ENCODE measurements at regions of chr5 and their contacts with region 1.

Region 1: DNA sequence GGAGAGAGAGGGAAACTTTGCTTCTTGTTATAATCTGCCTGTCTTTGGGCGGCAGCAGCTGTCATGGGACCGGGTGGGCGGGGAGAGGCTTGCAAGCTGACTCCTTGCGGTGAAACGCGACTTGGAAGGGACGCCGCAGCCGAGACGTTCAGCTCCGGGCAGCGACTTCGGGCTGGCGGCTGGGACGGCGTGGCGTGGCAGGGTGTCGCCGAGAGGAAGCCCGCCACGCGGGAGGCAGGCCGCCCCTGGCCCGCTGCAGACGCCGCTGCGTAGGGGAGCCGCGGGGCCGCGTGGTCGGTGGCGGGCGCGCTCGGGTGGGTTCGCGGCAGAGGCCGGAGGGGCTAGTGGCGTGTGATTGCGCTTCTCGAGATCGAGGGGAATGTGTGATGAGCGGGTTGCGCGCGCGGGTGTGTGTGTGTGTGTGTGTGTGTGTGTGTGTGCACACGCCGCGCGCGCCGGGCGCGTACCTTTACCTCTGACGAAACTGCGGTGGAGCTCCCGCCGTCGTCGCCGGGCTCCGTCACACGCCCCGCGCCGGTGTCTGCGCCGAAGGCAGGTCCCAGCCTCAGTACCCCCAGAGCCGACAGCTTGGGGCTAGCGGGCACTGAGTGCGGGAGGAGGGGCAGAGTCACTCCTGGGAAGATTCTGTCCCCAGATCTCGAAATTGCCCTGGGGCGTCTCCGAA is 1.7 kb downstream of the PPARGC1B start:
- DNase-seq: peak; percentile 96
- ATAC-seq: peak; percentile 64 to 68
- H3K4me3 ChIP-seq: peak overlapping the region; percentile 86 to 98 (median 94)
- H3K27ac ChIP-seq: peak overlapping the region; percentile 98 to 99 (median 99)
- H3K4me1 ChIP-seq: peaks cover 18 to 30% of the 10 kb centered on the region in 2 donors
- H3K27me3 ChIP-seq: no peaks in the 10 kb centered on the region
- CTCF ChIP-seq: peak in 1 of 5 experiments; percentile 14
- POLR2A ChIP-seq: peak; percentile 82 to 89

Region 2: GRCh38 chr5:149108651-149109280 is 623.0 kb before region 1 on chr5:
- in situ Hi-C with region 1: no loop called
- intact Hi-C with region 1: no loop called
- DNase-seq: no peak
- ATAC-seq: no peak
- H3K4me3 ChIP-seq: no peak overlapping the region
- H3K27ac ChIP-seq: no peak overlapping the region
- H3K4me1 ChIP-seq: no peaks in the 10 kb centered on the region
- H3K27me3 ChIP-seq: no peaks in the 10 kb centered on the region
- CTCF ChIP-seq: no peak
- POLR2A ChIP-seq: no peak

Region 3: GRCh38 chr5:149667084-149667828 is 64.5 kb before region 1 on chr5:
- in situ Hi-C with region 1: no loop called
- intact Hi-C with region 1: loop called (anchors 2 kb)
- DNase-seq: no peak
- ATAC-seq: peak; percentile 41 to 47
- H3K4me3 ChIP-seq: no peak overlapping the region
- H3K27ac ChIP-seq: peak overlapping the region; percentile 5 to 49 (median 27)
- H3K4me1 ChIP-seq: peaks cover 19 to 29% of the 10 kb centered on the region in 2 donors
- H3K27me3 ChIP-seq: no peaks in the 10 kb centered on the region
- CTCF ChIP-seq: peak; percentile 79 to 88 (median 86)
- POLR2A ChIP-seq: no peak

Region 4: DNA sequence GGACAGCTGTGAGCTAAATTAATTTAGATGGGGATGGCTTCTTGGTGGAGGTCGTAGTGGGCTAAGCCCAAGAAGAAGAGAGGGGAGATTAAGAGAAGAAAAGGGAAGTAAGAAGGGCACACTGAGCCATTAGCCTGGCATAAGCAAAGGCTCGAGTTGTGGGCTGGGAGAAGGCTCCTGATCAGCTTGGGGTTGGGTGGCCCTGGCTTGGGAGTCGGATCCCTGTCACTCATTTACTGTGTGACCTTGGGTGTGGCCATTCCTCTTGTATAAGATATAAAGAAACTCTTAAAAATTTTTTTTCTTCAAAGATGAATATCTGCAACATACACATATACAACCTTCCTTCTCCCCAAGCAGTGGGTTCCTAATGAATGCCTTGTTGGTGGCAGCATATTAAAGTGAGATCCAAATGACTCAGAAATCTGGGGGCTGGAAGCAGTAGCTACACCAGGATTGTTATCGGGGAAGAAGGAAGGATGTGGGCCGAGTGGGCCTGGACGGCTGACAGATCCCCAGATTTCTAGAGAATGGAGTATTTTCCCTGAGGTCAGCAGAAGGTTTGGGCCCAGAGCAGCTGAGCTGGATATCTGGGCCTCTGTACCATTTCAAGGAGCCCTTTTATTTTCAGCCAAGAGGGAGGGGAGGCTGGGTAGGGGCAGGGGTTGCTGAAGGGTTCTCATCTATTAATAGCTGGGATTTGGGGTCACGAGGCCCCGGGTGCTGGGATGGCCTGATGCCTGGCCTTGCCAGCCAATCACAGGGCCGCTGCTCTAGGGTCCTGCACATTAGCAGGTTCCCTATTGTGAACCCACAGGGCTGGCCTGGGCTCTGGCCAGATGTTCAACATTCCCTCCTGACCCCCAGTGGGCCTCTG is 50.5 kb after region 1 on chr5:
- in situ Hi-C with region 1: no loop called
- intact Hi-C with region 1: no loop called
- DNase-seq: no peak
- ATAC-seq: no peak
- H3K4me3 ChIP-seq: no peak overlapping the region
- H3K27ac ChIP-seq: peak overlapping the region; percentile 75 to 90 (median 86)
- H3K4me1 ChIP-seq: peaks cover 44 to 48% of the 10 kb centered on the region in 2 donors
- H3K27me3 ChIP-seq: no peaks in the 10 kb centered on the region
- CTCF ChIP-seq: no peak
- POLR2A ChIP-seq: no peak

Region 5: GRCh38 chr5:149799119-149799623 is 67.4 kb after region 1 on chr5:
- in situ Hi-C with region 1: no loop called
- intact Hi-C with region 1: loop called (anchors 2 kb)
- DNase-seq: peak; percentile 79 to 93
- ATAC-seq: peak; percentile 67 to 74
- H3K4me3 ChIP-seq: peak overlapping the region in 3 of 4 donors; percentile 12 to 45 (median 41)
- H3K27ac ChIP-seq: peak overlapping the region; percentile 94 to 99 (median 98)
- H3K4me1 ChIP-seq: peaks cover 96% of the 10 kb centered on the region in 2 donors
- H3K27me3 ChIP-seq: no peaks in the 10 kb centered on the region
- CTCF ChIP-seq: no peak
- POLR2A ChIP-seq: peak; percentile 41 to 53

Region 6: GRCh38 chr5:149828161-149828884 is 96.5 kb after region 1 on chr5:
- in situ Hi-C with region 1: loop called in 2 of 4 experiments (anchors 5 to 10 kb)
- intact Hi-C with region 1: loop called (anchors 1 kb)
- DNase-seq: peak; percentile 70 to 91
- ATAC-seq: peak; percentile 80 to 89
- H3K4me3 ChIP-seq: no peak overlapping the region
- H3K27ac ChIP-seq: peak overlapping the region; percentile 74 to 84 (median 79)
- H3K4me1 ChIP-seq: peaks cover 42 to 43% of the 10 kb centered on the region in 2 donors
- H3K27me3 ChIP-seq: no peaks in the 10 kb centered on the region
- CTCF ChIP-seq: peak; percentile 89 to 94 (median 92)
- POLR2A ChIP-seq: no peak

Region 7: GRCh38 chr5:150245111-150245789 is 513.5 kb after region 1 on chr5:
- in situ Hi-C with region 1: no loop called
- intact Hi-C with region 1: loop called (anchors 10 kb)
- DNase-seq: peak; percentile 92 to 97
- ATAC-seq: peak; percentile 60 to 71
- H3K4me3 ChIP-seq: peak overlapping the region; percentile 44 to 66 (median 61)
- H3K27ac ChIP-seq: peak overlapping the region; percentile 91 to 100 (median 100)
- H3K4me1 ChIP-seq: peaks cover 51 to 62% of the 10 kb centered on the region in 2 donors
- H3K27me3 ChIP-seq: no peaks in the 10 kb centered on the region
- CTCF ChIP-seq: no peak
- POLR2A ChIP-seq: peak; percentile 90

Measured in gastrocnemius medialis (tissue), 4 donors.